Endothelial cell of umbilical vein (primary cell): ENCODE measurements at regions of chr15 and their contacts with region 1.

Region 1: DNA sequence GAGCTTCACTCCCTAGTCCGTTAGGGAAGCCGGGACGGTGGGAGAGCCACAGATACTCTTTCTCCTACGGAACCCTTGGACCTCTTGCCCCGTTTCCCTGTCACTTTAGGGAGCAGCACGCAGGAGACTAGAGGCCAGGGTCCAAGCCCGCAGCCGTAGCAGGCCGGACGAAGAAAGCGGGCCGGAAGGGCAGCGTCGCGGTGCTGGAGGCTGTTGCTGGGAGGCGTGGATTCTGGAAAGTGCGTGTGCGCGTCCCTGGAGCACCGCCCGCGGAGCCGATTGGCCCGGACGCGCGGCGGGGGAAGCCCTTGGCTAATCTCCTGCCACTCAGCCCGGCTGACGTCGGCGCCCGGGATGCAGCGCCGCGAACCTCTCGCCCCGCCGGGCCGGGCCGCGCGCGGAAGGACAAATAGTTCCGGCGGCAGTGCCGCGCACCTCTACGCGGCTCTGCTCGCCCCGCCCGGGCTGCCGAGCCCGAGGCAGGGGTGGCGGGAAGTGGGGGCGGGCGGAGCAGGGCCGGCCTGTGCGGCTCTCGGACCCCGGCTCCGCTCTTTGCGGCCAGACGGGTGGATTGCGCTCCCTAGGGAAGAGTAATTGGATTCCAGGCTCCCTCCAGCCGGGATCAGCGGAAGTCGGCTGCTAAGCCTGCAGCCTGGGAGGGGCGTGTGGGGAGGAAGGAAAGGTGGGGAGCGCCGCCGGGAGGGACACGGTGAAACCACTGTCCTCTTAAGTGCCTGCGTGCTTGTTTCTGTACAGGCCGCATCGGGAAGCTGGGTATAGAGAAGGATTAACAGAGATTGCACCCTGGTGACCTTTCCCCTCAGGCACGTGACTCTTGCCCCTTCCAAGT is 31.3 kb upstream of the TCF12 start:
- DNase-seq: peak; percentile 91
- H3K4me3 ChIP-seq: peak overlapping the region; percentile 23 to 79 (median 67)
- H3K27ac ChIP-seq: peak overlapping the region; percentile 73
- H3K4me1 ChIP-seq: peaks cover 15% of the 10 kb centered on the region
- H3K27me3 ChIP-seq: no peaks in the 10 kb centered on the region
- CTCF ChIP-seq: peak in 1 of 2 donors; percentile 4
- POLR2A ChIP-seq: peak; percentile 81

Region 2: DNA sequence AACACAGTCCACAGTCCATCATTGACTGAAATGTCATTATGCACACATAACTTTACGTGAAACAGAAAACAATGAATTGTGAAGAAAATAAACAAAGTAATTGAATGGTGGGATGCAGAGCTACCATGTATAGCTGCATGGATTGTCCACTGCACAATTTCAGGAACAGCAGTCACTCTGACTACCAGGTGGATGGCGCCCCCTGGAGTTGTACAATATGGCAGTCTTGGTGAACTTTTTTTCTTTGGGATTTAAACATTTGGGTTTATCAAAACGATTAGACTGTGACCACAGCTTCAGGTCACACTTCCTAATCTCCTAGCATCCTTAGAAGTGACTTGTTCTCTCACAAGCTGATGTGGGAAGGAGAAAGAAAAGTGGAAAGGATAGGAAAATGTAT is 17.6 kb before region 1 on chr15:
- CTCF ChIA-PET with region 1: interaction called, 3 read pairs
- POLR2A ChIA-PET with region 1: no interaction called
- dilution Hi-C with region 1: no loop called
- intact Hi-C with region 1: loop called (anchors 1 kb)
- DNase-seq: peak; percentile 31
- H3K4me3 ChIP-seq: no peak overlapping the region
- H3K27ac ChIP-seq: no peak overlapping the region
- H3K4me1 ChIP-seq: peaks cover 16% of the 10 kb centered on the region
- H3K27me3 ChIP-seq: no peaks in the 10 kb centered on the region
- CTCF ChIP-seq: peak; percentile 41 to 46
- POLR2A ChIP-seq: no peak